T-cell (primary cell): ENCODE measurements at regions of chr14 and their contacts with region 1.

Region 1: DNA sequence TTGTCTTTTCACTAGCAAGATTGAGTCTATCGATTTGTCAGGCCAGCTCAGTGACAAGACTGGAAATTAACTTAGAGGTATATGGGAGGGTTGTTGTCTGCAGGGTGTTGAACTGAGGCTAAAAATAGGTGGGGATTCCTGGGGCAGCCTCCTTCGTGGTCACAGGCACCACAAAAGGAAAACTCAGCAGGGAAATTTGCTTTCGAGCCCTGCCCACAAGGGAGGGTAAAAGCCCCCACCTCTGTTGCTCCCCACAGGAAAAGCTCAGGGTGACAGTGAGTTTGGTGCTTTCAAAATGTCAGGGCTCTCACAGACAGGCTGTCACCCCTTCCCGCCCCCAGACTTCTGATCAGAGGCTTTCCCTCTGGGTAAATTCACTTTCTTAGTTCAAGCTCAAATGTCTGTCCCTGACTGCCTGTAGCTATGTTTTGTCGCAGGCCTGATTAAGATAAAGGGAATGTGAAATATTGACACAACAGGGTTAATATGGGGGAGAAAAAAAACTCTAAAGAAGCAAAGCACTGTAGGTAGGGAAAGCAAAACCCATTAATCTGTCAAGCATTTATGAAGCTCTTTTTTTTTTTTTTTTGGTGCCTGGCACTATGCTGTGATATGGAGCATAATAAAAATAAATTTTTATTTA is 11.7 kb upstream of the NFKBIA start:
- DNase-seq: peak in 28 of 35 experiments; percentile 19 to 87 (median 45)
- ATAC-seq: peak; percentile 18 to 75 (median 34)
- H3K4me3 ChIP-seq: no peak overlapping the region
- H3K4me3 Mint-ChIP-seq: peak overlapping the region in 2 of 3 donors; percentile 35 to 65
- H3K27ac ChIP-seq: peak overlapping the region; percentile 83
- H3K27ac Mint-ChIP-seq: peak overlapping the region; percentile 85 to 87
- H3K4me1 ChIP-seq: peaks cover 17 to 42% of the 10 kb centered on the region in 2 experiments
- H3K4me1 Mint-ChIP-seq: peaks cover 39 to 50% (median 49%) of the 10 kb centered on the region in 3 donors
- H3K27me3 ChIP-seq: no peaks in the 10 kb centered on the region
- H3K27me3 Mint-ChIP-seq: no peaks in the 10 kb centered on the region

Region 2: DNA sequence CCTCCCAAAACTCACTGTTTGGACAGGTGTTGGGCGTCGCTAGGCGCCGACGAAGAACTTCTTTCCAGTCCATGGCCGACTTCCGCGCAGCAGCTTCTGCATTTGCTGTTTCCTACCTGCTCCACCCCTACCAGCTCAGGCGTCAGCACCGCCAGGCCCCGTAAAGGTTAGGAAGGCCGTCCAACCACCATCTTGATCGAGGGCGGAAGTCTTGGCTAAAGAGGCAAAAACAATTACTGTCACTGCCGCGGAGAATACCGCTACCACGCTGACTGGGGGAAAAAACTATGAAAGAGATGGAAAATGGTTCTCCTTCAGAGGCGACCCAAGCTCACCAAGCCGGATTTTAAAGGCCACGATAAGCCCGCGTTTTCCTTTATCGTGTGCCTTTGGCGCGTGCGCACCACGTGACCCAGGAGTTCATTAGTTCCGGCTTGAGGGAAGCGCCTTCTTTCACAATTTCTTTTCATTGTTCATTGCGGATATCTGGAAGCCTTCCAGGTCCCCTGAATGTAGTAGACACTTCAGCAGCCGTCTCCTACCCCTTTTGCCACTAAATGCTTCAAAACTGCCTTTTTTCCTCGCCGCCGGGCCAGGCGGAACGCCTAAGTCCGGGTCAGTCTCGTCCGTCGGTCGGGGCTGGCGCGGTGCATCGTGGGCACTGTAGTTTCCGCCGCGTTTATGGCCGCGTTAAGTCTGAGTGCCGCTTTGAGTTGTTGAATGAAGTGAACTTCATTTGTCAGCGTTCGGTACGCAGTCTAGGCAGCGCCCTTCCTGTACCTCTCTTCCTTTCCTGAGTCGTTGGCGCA is 294.1 kb before region 1 on chr14 and contains the starts of genes PPP2R3C and PRORP:
- CTCF ChIA-PET with region 1: interaction called, 3 to 4 read pairs
- POLR2A ChIA-PET with region 1: interaction called, 3 to 13 read pairs
- DNase-seq: peak; percentile 76 to 94 (median 92)
- ATAC-seq: peak; percentile 84 to 91 (median 86)
- H3K4me3 ChIP-seq: peak within 1 kb of the TSS; percentile 92 to 94
- H3K4me3 Mint-ChIP-seq: peak within 1 kb of the TSS; percentile 98 to 99 (median 98)
- H3K27ac ChIP-seq: peak within 1 kb of the TSS; percentile 99
- H3K27ac Mint-ChIP-seq: peak within 1 kb of the TSS; percentile 100
- H3K4me1 ChIP-seq: peaks cover 15 to 46% of the 10 kb centered on the region in 2 experiments
- H3K4me1 Mint-ChIP-seq: peaks cover 74 to 78% (median 75%) of the 10 kb centered on the region in 3 donors
- H3K27me3 ChIP-seq: no peaks in the 10 kb centered on the region
- H3K27me3 Mint-ChIP-seq: no peaks in the 10 kb centered on the region
- total RNA-seq, gene PPP2R3C: 28.1 to 40.5 (median 32.9) TPM
- total RNA-seq, gene PRORP: 31.9 to 43.3 (median 35.9) TPM

Region 3: DNA sequence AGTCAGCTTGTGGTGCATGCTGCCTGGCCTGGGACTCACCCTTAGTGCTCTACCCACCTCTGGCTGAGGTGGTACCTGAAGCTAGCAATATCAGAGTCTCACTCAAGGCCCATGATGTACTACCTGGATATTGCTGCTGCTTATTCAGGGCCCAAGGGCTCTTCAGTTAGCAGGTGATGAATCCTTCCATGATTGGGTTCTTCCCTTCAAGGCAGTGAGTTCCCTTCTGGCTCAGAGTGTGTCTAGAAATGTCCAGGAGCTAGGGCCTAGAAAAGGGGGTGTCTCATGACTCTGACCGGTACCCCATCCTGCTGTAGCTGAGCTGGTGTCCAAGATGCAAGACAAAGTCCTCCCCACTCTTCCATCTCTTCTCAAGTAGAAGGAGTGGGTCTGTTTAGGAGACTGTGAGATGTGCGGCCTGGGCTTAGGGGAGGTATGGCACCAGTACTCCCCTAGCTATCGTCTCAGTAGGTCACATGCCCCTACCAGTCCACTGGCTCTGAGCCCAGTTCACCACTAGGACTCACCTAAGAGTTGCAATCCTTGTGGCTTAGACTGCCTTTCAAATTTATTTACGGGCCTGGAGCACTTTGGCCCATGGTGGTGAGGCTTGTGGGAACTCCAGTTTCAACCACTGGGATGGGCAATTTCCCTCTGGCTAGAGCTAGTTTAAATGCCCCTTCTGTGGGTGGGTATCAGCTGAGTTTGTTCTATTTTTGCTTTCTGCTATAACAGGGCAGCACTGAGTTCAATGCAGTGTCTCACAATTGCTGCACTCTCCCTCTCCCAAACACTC is 281.7 kb before region 1 on chr14:
- CTCF ChIA-PET with region 1: interaction called, 6 to 127 read pairs
- POLR2A ChIA-PET with region 1: interaction called in 1 of 2 experiments, 4 read pairs
- DNase-seq: no peak
- ATAC-seq: no peak
- H3K4me3 ChIP-seq: no peak overlapping the region
- H3K4me3 Mint-ChIP-seq: no peak overlapping the region
- H3K27ac ChIP-seq: no peak overlapping the region
- H3K27ac Mint-ChIP-seq: peak overlapping the region in 1 of 2 donors; percentile 60
- H3K4me1 ChIP-seq: no peaks in the 10 kb centered on the region
- H3K4me1 Mint-ChIP-seq: peaks cover 28 to 32% (median 31%) of the 10 kb centered on the region in 3 donors
- H3K27me3 ChIP-seq: no peaks in the 10 kb centered on the region
- H3K27me3 Mint-ChIP-seq: no peaks in the 10 kb centered on the region

Region 4: GRCh38 chr14:35140718-35141581 is 275.3 kb before region 1 on chr14:
- CTCF ChIA-PET with region 1: interaction called, 27 to 127 read pairs
- POLR2A ChIA-PET with region 1: interaction called, 4 read pairs
- DNase-seq: peak in 1 of 35 experiments; percentile 37
- ATAC-seq: peak in 1 of 4 experiments; percentile 57
- H3K4me3 ChIP-seq: no peak overlapping the region
- H3K4me3 Mint-ChIP-seq: no peak overlapping the region
- H3K27ac ChIP-seq: peak overlapping the region; percentile 44
- H3K27ac Mint-ChIP-seq: peak overlapping the region; percentile 35 to 80
- H3K4me1 ChIP-seq: no peaks in the 10 kb centered on the region
- H3K4me1 Mint-ChIP-seq: peaks cover 24 to 34% (median 24%) of the 10 kb centered on the region in 3 donors
- H3K27me3 ChIP-seq: no peaks in the 10 kb centered on the region
- H3K27me3 Mint-ChIP-seq: no peaks in the 10 kb centered on the region

Region 5: DNA sequence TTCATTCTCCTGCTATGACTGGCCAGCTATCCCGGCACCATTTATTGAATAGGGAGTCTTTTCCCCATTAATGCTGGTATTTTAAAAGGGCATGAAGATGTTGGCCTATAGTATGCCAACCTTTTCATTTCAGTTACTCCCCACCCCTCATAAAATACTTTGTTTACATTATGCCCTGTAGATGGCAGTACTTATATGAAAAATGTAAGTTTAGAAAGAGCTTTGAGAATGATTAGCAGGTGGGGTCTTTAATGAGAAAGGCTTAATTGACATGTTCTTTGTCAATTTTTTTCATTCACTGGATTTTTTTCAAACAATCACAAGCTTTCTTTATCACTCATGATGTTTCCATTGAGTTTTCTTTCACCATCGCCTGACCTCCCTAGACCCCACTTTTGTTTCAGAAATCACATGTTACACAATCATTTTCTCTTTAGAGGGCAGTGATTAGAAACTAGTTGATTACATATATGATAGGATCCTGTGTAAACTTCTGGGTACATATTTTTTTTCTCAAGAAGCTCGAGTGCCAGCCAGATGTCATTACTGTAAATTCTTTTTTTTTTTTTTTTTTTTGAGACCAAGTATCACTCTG is 186.6 kb before region 1 on chr14:
- CTCF ChIA-PET with region 1: interaction called, 21 to 35 read pairs
- POLR2A ChIA-PET with region 1: no interaction called
- DNase-seq: peak in 1 of 35 experiments; percentile 47
- ATAC-seq: peak in 2 of 4 experiments; percentile 38 to 55
- H3K4me3 ChIP-seq: no peak overlapping the region
- H3K4me3 Mint-ChIP-seq: no peak overlapping the region
- H3K27ac ChIP-seq: no peak overlapping the region
- H3K27ac Mint-ChIP-seq: no peak overlapping the region
- H3K4me1 ChIP-seq: peaks cover 4 to 10% of the 10 kb centered on the region in 2 experiments
- H3K4me1 Mint-ChIP-seq: peaks cover 19 to 31% (median 20%) of the 10 kb centered on the region in 3 donors
- H3K27me3 ChIP-seq: no peaks in the 10 kb centered on the region
- H3K27me3 Mint-ChIP-seq: no peaks in the 10 kb centered on the region

Region 6: DNA sequence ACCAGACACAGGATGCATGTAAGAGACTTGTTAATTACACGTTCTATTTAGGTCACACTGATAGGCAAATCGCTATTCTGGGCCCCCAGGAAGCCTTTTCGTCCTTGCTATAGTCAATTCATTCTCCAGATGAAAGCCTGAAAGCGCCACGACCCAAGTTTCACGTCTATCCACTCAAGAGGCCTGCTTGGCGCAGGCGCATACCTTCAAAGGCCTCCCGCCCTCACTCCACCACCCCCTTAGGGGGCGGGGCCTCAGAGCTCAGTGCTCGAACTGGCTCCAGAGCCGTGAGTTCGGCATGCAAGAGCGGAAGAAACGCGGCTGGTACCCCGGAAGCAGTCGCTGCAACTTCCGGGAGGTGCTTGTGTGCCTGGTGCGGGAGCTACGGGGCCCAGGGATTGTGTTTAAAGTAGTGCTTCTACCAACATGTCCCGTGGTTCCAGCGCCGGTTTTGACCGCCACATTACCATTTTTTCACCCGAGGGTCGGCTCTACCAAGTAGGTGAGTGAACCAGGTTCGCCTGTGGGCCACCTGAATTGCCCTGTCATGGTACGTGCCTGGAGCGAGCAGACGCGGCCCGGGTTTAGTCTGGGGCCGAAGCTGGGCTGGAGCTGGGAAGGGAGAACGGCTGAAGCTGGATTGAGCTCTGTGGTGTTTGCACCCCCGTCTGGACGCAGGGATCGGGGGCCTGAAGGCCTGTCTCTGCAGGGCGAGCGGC is 124.0 kb before region 1 on chr14 and contains the start of gene PSMA6:
- CTCF ChIA-PET with region 1: interaction called, 5 to 12 read pairs
- POLR2A ChIA-PET with region 1: interaction called, 3 to 7 read pairs
- DNase-seq: peak; percentile 97 to 100 (median 99)
- ATAC-seq: peak; percentile 94 to 98 (median 96)
- H3K4me3 ChIP-seq: peak within 1 kb of the TSS; percentile 83 to 98
- H3K4me3 Mint-ChIP-seq: peak within 1 kb of the TSS; percentile 99
- H3K27ac ChIP-seq: peak within 1 kb of the TSS; percentile 88
- H3K27ac Mint-ChIP-seq: peak within 1 kb of the TSS; percentile 97 to 98
- H3K4me1 ChIP-seq: peaks cover 26 to 38% of the 10 kb centered on the region in 2 experiments
- H3K4me1 Mint-ChIP-seq: peaks cover 44 to 52% (median 52%) of the 10 kb centered on the region in 3 donors
- H3K27me3 ChIP-seq: no peaks in the 10 kb centered on the region
- H3K27me3 Mint-ChIP-seq: no peaks in the 10 kb centered on the region
- total RNA-seq, gene PSMA6: 93.6 to 109 (median 96.9) TPM

Region 7: GRCh38 chr14:35355981-35356841 is 60.0 kb before region 1 on chr14:
- CTCF ChIA-PET with region 1: no interaction called
- POLR2A ChIA-PET with region 1: no interaction called
- DNase-seq: no peak
- ATAC-seq: peak; percentile 42 to 58 (median 45)
- H3K4me3 ChIP-seq: no peak overlapping the region
- H3K4me3 Mint-ChIP-seq: no peak overlapping the region
- H3K27ac ChIP-seq: no peak overlapping the region
- H3K27ac Mint-ChIP-seq: no peak overlapping the region
- H3K4me1 ChIP-seq: peaks cover 12 to 18% of the 10 kb centered on the region in 2 experiments
- H3K4me1 Mint-ChIP-seq: peaks cover 16 to 28% (median 16%) of the 10 kb centered on the region in 3 donors
- H3K27me3 ChIP-seq: no peaks in the 10 kb centered on the region
- H3K27me3 Mint-ChIP-seq: no peaks in the 10 kb centered on the region